ENCODE measurements at regions of chr14 and their contacts with region 1.

Region 1: DNA sequence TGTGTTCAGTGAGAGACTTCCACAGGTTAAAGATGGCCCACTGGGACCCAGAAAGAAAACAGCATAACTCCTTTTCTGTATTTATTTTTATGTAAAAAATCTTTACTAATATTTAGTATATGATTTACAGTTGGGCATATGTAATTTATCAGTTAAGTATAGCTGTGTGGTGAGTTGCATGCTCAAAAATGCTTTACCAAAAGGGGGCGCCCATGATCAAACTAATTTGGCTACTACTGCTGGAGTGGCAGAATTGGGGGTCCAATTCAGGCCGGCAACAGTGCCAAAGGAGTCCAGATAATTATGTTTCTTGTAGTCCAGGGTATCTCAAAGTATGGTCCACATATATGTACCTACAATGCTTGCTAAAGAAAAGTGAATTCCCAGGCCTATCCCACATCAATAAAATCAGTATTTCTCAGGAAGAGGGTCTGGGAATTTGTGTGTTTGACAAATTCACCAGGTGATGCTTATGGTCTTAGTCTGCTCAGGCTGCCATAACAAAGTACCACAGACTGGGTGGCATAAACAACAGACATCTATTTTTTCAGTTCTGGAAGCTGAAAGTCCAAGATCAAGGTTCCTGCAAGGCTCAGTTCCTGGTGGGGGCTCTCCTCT is 152.0 kb downstream of the KTN1 start:
- DNase-seq: no peak
- ATAC-seq: peak; percentile 77
- H3K4me3 ChIP-seq: no peak overlapping the region
- H3K27ac ChIP-seq: no peak overlapping the region
- H3K4me1 ChIP-seq: no peaks in the 10 kb centered on the region
- H3K27me3 ChIP-seq: no peaks in the 10 kb centered on the region
- CTCF ChIP-seq: peak; percentile 53 to 64 (median 63)
- EP300 ChIP-seq: no peak
- POLR2A ChIP-seq: no peak
- RAD21 ChIP-seq: peak; percentile 64

Region 2: GRCh38 chr14:55689981-55690863 is 41.8 kb before region 1 on chr14:
- CTCF ChIA-PET with region 1: no interaction called
- POLR2A ChIA-PET with region 1: no interaction called
- RAD21 ChIA-PET with region 1: no interaction called
- SMC1A ChIA-PET with region 1: no interaction called
- in situ Hi-C with region 1: no loop called
- intact Hi-C with region 1: no loop called
- DNase-seq: no peak
- ATAC-seq: peak; percentile 69
- H3K4me3 ChIP-seq: no peak overlapping the region
- H3K27ac ChIP-seq: no peak overlapping the region
- H3K4me1 ChIP-seq: peaks cover 21% of the 10 kb centered on the region
- H3K27me3 ChIP-seq: no peaks in the 10 kb centered on the region
- CTCF ChIP-seq: no peak
- EP300 ChIP-seq: no peak
- POLR2A ChIP-seq: no peak
- RAD21 ChIP-seq: no peak

Region 3: GRCh38 chr14:55715889-55716288 is 16.1 kb before region 1 on chr14:
- CTCF ChIA-PET with region 1: interaction called, 11 read pairs
- POLR2A ChIA-PET with region 1: no interaction called
- RAD21 ChIA-PET with region 1: interaction called, 3 read pairs
- SMC1A ChIA-PET with region 1: no interaction called
- in situ Hi-C with region 1: no loop called
- intact Hi-C with region 1: no loop called
- DNase-seq: no peak
- ATAC-seq: peak; percentile 83
- H3K4me3 ChIP-seq: no peak overlapping the region
- H3K27ac ChIP-seq: no peak overlapping the region
- H3K4me1 ChIP-seq: peaks cover 3% of the 10 kb centered on the region; the same call in 1 of the 2 replicates
- H3K27me3 ChIP-seq: no peaks in the 10 kb centered on the region
- CTCF ChIP-seq: no peak
- EP300 ChIP-seq: no peak
- POLR2A ChIP-seq: no peak
- RAD21 ChIP-seq: no peak

Region 4: DNA sequence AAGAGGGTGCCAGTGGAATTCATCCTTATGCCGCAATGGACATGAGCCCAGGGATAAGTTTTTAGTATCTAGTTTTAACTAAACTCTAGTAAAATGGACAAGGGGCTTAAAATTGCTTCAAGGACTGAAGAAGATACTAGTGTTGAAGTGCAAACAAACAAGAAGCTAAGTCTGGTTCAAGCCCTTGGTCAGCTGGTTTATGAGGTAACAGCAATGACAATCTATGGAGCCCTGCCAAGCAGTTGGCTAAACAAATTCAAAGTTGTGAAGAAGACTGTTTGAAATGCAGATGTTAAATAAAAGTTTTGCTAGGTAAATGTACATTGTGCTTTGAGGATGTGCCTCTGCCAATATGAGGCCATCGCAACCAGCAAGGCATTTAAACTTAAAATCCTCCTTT is 57.4 kb after region 1 on chr14:
- CTCF ChIA-PET with region 1: no interaction called
- POLR2A ChIA-PET with region 1: no interaction called
- RAD21 ChIA-PET with region 1: no interaction called
- SMC1A ChIA-PET with region 1: no interaction called
- in situ Hi-C with region 1: no loop called
- intact Hi-C with region 1: no loop called
- DNase-seq: no peak
- ATAC-seq: no peak
- H3K4me3 ChIP-seq: no peak overlapping the region
- H3K27ac ChIP-seq: no peak overlapping the region
- H3K4me1 ChIP-seq: no peaks in the 10 kb centered on the region
- H3K27me3 ChIP-seq: peaks cover 0 to 2% of the 10 kb centered on the region in 2 experiments; a peak in 1 of 4 replicates
- CTCF ChIP-seq: no peak
- EP300 ChIP-seq: no peak
- POLR2A ChIP-seq: no peak
- RAD21 ChIP-seq: no peak

Region 5: GRCh38 chr14:56170028-56170427 is 438.0 kb after region 1 on chr14:
- CTCF ChIA-PET with region 1: no interaction called
- POLR2A ChIA-PET with region 1: no interaction called
- RAD21 ChIA-PET with region 1: no interaction called
- SMC1A ChIA-PET with region 1: no interaction called
- in situ Hi-C with region 1: no loop called
- intact Hi-C with region 1: no loop called
- DNase-seq: no peak
- ATAC-seq: no peak
- H3K4me3 ChIP-seq: no peak overlapping the region
- H3K27ac ChIP-seq: no peak overlapping the region
- H3K4me1 ChIP-seq: no peaks in the 10 kb centered on the region
- H3K27me3 ChIP-seq: no peaks in the 10 kb centered on the region; a peak in 1 of 4 replicates
- CTCF ChIP-seq: no peak
- EP300 ChIP-seq: no peak
- POLR2A ChIP-seq: no peak
- RAD21 ChIP-seq: no peak

Region 6: DNA sequence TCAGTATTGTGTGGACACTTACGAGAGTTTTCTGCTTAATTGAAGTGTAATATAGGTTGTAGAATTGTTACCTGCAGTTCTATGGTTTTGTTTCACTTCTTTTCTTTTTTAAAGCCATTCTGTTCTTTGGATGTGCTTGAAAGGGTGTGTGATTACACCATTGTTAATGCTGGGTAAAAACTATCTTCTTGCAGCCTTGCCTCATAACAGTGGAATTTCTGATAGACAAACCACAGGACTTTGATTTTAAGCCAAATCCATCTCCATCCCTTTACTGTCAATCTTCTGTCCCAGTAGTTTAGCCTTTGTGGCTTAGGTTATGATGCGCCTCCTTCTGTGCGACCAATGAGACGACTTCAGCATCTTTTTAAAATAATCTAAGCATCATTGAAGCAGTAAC is 568.5 kb after region 1 on chr14:
- CTCF ChIA-PET with region 1: no interaction called
- POLR2A ChIA-PET with region 1: no interaction called
- RAD21 ChIA-PET with region 1: no interaction called
- SMC1A ChIA-PET with region 1: no interaction called
- in situ Hi-C with region 1: no loop called
- intact Hi-C with region 1: no loop called
- DNase-seq: no peak
- ATAC-seq: no peak
- H3K4me3 ChIP-seq: no peak overlapping the region
- H3K27ac ChIP-seq: no peak overlapping the region
- H3K4me1 ChIP-seq: no peaks in the 10 kb centered on the region
- H3K27me3 ChIP-seq: no peaks in the 10 kb centered on the region; a peak in 1 of 4 replicates
- CTCF ChIP-seq: no peak
- EP300 ChIP-seq: no peak
- POLR2A ChIP-seq: no peak
- RAD21 ChIP-seq: no peak

Region 7: GRCh38 chr14:56422703-56423213 is 690.8 kb after region 1 on chr14:
- CTCF ChIA-PET with region 1: interaction called, 17 read pairs
- POLR2A ChIA-PET with region 1: no interaction called
- RAD21 ChIA-PET with region 1: interaction called, 11 read pairs
- SMC1A ChIA-PET with region 1: interaction called, 5 read pairs
- in situ Hi-C with region 1: no loop called
- intact Hi-C with region 1: no loop called
- DNase-seq: no peak
- ATAC-seq: peak; percentile 65
- H3K4me3 ChIP-seq: no peak overlapping the region
- H3K27ac ChIP-seq: no peak overlapping the region
- H3K4me1 ChIP-seq: no peaks in the 10 kb centered on the region
- H3K27me3 ChIP-seq: no peaks in the 10 kb centered on the region
- CTCF ChIP-seq: peak; percentile 35 to 50 (median 48); a peak in 4 of 6 replicates
- EP300 ChIP-seq: no peak
- POLR2A ChIP-seq: no peak
- RAD21 ChIP-seq: peak; percentile 59

Measured in GM12878 (cell line).